ENCODE measurements at regions of chr3 and their contacts with region 1.

Region 1: GRCh38 chr3:123489400-123490004 is 40.6 kb upstream of the ADCY5 start:
- DNase-seq: peak; percentile 23
- H3K4me3 ChIP-seq: no peak overlapping the region
- H3K27ac ChIP-seq: no peak overlapping the region
- H3K4me1 ChIP-seq: no peaks in the 10 kb centered on the region
- H3K27me3 ChIP-seq: no peaks in the 10 kb centered on the region
- CTCF ChIP-seq: peak; percentile 75 to 93

Region 2: DNA sequence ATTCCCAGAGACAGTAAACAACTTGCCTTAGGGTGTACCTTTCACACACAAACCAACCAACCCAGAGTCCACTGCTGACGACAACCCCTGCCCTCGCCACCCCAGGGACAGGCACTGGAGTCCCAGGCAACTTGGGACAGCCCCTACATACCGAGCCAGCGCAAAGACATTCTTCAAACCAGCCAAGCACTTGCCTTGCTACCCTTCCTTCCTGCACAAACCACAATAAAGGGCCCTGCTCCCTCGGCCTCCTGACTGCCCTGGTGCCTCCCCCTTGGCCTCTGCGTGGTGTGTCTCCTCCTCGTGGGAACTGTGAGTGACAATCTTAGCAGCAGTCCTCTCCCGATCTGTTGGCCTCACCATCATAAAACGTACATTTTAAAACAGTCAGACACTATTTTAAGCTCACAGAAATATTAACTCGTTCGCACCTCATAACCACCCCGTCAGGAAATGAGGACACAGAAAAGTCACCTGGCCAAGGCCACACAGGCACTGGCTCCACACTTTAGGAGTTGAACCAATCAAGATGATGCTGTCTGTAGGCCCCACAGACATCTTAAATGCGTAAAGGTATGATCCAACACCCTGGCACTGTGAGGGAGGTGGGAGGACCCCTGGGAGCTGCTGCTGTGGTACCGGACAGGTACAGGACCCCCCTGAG is 154.4 kb before region 1 on chr3:
- CTCF ChIA-PET with region 1: interaction called, 8 read pairs
- dilution Hi-C with region 1: no loop called
- in situ Hi-C with region 1: loop called in 1 of 2 experiments (anchors 10 kb)
- intact Hi-C with region 1: no loop called
- DNase-seq: no peak
- H3K4me3 ChIP-seq: no peak overlapping the region
- H3K27ac ChIP-seq: no peak overlapping the region
- H3K4me1 ChIP-seq: peaks cover 11% of the 10 kb centered on the region
- H3K27me3 ChIP-seq: no peaks in the 10 kb centered on the region
- CTCF ChIP-seq: no peak

Region 3: GRCh38 chr3:123449102-123449996 is 40.2 kb before region 1 on chr3:
- CTCF ChIA-PET with region 1: no interaction called
- dilution Hi-C with region 1: no loop called
- in situ Hi-C with region 1: no loop called
- intact Hi-C with region 1: loop called (anchors 5 kb)
- DNase-seq: peak; percentile 13
- H3K4me3 ChIP-seq: peak overlapping the region; percentile 37 to 41 (median 40)
- H3K27ac ChIP-seq: no peak overlapping the region
- H3K4me1 ChIP-seq: peaks cover 8% of the 10 kb centered on the region
- H3K27me3 ChIP-seq: peaks cover 29% of the 10 kb centered on the region
- CTCF ChIP-seq: no peak